Natural killer cell (primary cell): ENCODE measurements at regions of chr2 and their contacts with region 1.

Region 1: DNA sequence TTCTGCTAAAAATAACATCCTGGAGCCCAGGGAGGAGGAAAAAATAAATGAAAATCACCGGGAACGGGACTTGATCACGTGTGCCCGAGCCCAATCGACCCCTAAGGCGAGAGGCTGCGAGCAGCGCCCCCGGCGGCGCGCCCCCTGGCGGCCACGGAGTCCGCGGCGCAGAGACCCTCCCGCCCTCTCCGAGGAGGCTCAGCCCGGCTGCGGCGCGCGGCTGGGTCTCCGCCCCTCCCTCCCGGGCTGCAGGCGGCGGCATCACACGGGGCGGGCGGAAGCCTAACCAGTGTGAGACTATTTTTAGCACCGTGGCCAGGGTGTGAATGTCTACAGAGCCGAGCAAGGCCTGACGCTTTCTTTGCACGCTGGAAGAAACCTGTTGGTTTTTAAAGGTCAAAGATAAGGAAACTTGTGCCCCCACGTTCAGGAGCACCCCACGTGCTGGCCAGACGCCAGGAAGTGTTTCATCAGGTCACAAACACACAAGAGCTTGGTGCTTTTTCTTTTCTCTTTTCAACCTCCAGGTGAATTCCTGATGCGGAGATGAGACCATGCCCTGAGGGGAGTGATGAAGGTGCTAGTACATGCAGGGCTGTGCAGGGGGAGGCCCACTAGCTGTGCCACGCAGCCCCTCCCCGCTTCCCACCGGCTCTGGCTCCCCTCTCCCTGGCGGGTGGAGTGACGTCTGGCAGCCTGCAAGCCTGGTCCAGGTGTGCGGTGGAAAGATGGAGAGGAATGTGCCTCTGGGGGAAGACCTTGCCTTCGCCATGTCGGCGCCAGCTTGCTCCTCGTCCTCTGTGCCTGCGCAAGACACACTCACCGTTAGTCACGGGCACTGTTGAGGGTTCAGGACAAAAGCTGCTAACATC is 35.3 kb upstream of the DNMT3A start:
- DNase-seq: peak; percentile 94 to 97
- ATAC-seq: peak; percentile 94 to 98 (median 96)
- H3K4me3 ChIP-seq: peak overlapping the region; percentile 15
- H3K4me3 Mint-ChIP-seq: peak overlapping the region; percentile 87
- H3K27ac ChIP-seq: peak overlapping the region; percentile 83
- H3K27ac Mint-ChIP-seq: peak overlapping the region; percentile 93 to 94
- H3K4me1 ChIP-seq: peaks cover 37% of the 10 kb centered on the region
- H3K4me1 Mint-ChIP-seq: peaks cover 23 to 43% of the 10 kb centered on the region in 2 donors
- H3K27me3 ChIP-seq: no peaks in the 10 kb centered on the region
- H3K27me3 Mint-ChIP-seq: peaks cover 11 to 22% of the 10 kb centered on the region in 2 donors
- CTCF ChIP-seq: peak; percentile 98

Region 2: GRCh38 chr2:25056098-25056821 is 320.7 kb before region 1 on chr2:
- intact Hi-C with region 1: no loop called
- DNase-seq: no peak
- ATAC-seq: no peak
- H3K4me3 ChIP-seq: no peak overlapping the region
- H3K4me3 Mint-ChIP-seq: no peak overlapping the region
- H3K27ac ChIP-seq: no peak overlapping the region
- H3K27ac Mint-ChIP-seq: no peak overlapping the region
- H3K4me1 ChIP-seq: no peaks in the 10 kb centered on the region
- H3K4me1 Mint-ChIP-seq: no peaks in the 10 kb centered on the region
- H3K27me3 ChIP-seq: no peaks in the 10 kb centered on the region
- H3K27me3 Mint-ChIP-seq: peaks cover 0 to 1% of the 10 kb centered on the region in 2 donors
- CTCF ChIP-seq: no peak

Region 3: DNA sequence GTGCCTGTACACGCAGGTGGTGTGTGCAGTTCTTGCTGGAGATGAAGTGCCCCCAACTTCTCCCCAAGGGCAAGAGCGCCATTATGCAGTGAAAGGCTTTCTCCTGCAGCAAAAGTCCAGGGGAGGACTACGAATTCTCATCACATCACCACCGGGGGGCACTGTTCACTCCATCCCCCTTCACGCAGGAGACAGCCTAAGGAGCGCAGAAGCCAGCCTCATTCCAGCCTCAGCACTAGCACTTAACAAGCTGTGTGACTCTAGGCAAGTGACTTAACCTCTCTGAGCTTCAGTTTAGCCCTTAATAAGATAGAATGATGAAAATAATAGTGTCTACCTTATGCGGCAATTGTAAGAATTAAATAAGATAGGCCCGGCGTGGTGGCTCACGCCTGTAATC is 67.6 kb before region 1 on chr2:
- intact Hi-C with region 1: loop called (anchors 1 kb)
- DNase-seq: peak; percentile 59 to 82
- ATAC-seq: peak in 2 of 3 donors; percentile 20 to 27
- H3K4me3 ChIP-seq: no peak overlapping the region
- H3K4me3 Mint-ChIP-seq: no peak overlapping the region
- H3K27ac ChIP-seq: no peak overlapping the region
- H3K27ac Mint-ChIP-seq: no peak overlapping the region
- H3K4me1 ChIP-seq: peaks cover 64% of the 10 kb centered on the region
- H3K4me1 Mint-ChIP-seq: peaks cover 31 to 52% of the 10 kb centered on the region in 2 donors
- H3K27me3 ChIP-seq: no peaks in the 10 kb centered on the region
- H3K27me3 Mint-ChIP-seq: no peaks in the 10 kb centered on the region
- CTCF ChIP-seq: peak; percentile 47

Region 4: DNA sequence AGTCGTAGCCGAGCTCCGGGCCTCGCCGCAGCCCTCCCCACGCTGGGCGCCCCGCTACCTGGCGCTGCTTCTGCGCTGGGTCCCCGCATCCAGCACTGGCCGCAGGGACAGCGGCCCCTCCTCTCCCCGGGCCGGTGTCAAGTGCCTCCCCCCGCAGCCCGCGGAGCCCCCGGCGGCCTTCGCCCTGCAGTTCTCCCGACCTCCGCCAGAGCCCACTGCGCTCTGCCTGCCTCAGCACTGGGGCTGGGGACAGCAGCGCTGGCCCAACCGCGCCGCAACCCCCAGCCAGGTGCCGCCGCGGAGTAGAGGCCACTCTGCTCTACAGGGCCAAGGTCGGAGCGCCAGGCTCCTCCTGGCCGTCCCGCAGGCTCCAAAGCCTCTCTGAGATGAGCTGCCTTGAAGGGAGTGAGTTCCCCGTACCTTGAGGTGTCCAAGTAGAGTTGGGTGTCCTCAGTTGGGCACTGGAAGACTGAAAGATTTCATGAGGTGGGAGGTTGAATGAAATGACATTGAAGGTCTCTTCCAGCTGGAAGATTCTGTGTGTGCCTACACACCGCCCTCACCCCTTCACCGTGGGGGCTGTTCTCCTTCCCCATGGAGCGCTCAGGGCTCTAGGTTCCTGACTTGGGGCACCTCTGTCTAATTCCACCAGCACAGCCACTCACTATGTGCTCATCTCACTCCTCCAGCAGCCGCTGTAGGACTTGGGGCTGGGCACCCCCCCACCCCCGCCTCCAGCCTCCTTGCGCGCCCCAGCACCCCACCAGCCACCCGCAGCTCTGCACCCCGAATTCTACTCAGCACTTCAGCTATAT is 34.4 kb before region 1 on chr2:
- intact Hi-C with region 1: loop called (anchors 2 kb)
- DNase-seq: peak; percentile 82 to 90
- ATAC-seq: peak; percentile 93 to 98 (median 94)
- H3K4me3 ChIP-seq: peak overlapping the region; percentile 20
- H3K4me3 Mint-ChIP-seq: peak overlapping the region; percentile 91
- H3K27ac ChIP-seq: no peak overlapping the region
- H3K27ac Mint-ChIP-seq: peak overlapping the region in 1 of 2 donors; percentile 85
- H3K4me1 ChIP-seq: peaks cover 33% of the 10 kb centered on the region
- H3K4me1 Mint-ChIP-seq: peaks cover 8 to 19% of the 10 kb centered on the region in 2 donors
- H3K27me3 ChIP-seq: no peaks in the 10 kb centered on the region
- H3K27me3 Mint-ChIP-seq: no peaks in the 10 kb centered on the region
- CTCF ChIP-seq: peak; percentile 95

Region 5: DNA sequence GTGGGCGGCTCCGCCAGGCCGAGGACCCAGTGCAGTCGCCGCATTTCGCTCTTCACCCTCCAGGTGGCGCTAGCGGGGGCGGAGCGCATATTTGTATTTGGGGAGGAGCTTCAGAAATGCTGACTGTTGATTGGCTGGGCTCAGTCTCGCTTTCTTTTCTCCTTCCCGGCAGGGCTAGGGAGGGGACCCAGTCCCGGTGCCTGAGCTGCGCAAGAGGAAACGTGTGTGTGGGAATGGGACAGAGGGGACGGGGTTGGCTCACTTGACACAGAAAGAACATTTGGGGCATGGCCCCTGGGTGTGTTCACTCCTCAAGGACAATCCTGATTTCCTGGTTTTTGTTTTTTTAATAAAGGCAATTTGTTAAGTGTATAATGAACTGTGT is 14.9 kb before region 1 on chr2:
- intact Hi-C with region 1: loop called (anchors 1 kb)
- DNase-seq: peak; percentile 95 to 96
- ATAC-seq: peak; percentile 88 to 95 (median 88)
- H3K4me3 ChIP-seq: peak overlapping the region; percentile 74
- H3K4me3 Mint-ChIP-seq: peak overlapping the region; percentile 94
- H3K27ac ChIP-seq: peak overlapping the region; percentile 93
- H3K27ac Mint-ChIP-seq: peak overlapping the region; percentile 94 to 96
- H3K4me1 ChIP-seq: peaks cover 21% of the 10 kb centered on the region
- H3K4me1 Mint-ChIP-seq: peaks cover 26 to 33% of the 10 kb centered on the region in 2 donors
- H3K27me3 ChIP-seq: no peaks in the 10 kb centered on the region
- H3K27me3 Mint-ChIP-seq: no peaks in the 10 kb centered on the region
- CTCF ChIP-seq: peak; percentile 90

Region 6: DNA sequence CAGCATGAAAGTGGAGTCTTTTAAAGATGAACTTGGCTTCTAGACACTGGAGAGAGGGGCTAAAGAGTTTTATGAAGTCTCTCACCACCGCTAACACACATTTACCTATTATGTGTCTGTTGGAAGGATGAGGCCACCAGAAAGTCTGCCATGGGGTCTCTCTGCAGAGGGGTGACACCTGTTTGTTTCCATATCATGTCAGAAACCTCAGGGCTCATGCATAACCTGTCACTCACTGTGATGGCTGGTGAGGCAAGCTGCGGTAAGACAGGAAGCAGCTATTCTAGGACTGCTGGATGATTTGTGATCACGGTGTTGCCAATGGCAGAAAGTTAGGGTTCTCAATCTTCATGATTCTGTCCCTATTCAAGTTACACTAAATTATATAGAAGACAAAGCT is 25.5 kb after region 1 on chr2:
- intact Hi-C with region 1: loop called (anchors 2 kb)
- DNase-seq: no peak
- ATAC-seq: peak in 1 of 3 donors; percentile 25
- H3K4me3 ChIP-seq: no peak overlapping the region
- H3K4me3 Mint-ChIP-seq: peak overlapping the region; percentile 68
- H3K27ac ChIP-seq: peak overlapping the region; percentile 22
- H3K27ac Mint-ChIP-seq: peak overlapping the region; percentile 82 to 87
- H3K4me1 ChIP-seq: peaks cover 20% of the 10 kb centered on the region
- H3K4me1 Mint-ChIP-seq: peaks cover 25 to 33% of the 10 kb centered on the region in 2 donors
- H3K27me3 ChIP-seq: no peaks in the 10 kb centered on the region
- H3K27me3 Mint-ChIP-seq: no peaks in the 10 kb centered on the region
- CTCF ChIP-seq: no peak

Region 7: GRCh38 chr2:25521665-25522387 is 144.8 kb after region 1 on chr2:
- intact Hi-C with region 1: loop called (anchors 1 kb)
- DNase-seq: peak in 1 of 2 donors; percentile 86
- ATAC-seq: peak; percentile 96 to 100 (median 100)
- H3K4me3 ChIP-seq: no peak overlapping the region
- H3K4me3 Mint-ChIP-seq: peak overlapping the region; percentile 25
- H3K27ac ChIP-seq: peak overlapping the region; percentile 53
- H3K27ac Mint-ChIP-seq: peak overlapping the region; percentile 62 to 71
- H3K4me1 ChIP-seq: peaks cover 5% of the 10 kb centered on the region
- H3K4me1 Mint-ChIP-seq: peaks cover 8 to 9% of the 10 kb centered on the region in 2 donors
- H3K27me3 ChIP-seq: no peaks in the 10 kb centered on the region
- H3K27me3 Mint-ChIP-seq: no peaks in the 10 kb centered on the region
- CTCF ChIP-seq: peak; percentile 77

Region 8: GRCh38 chr2:25558262-25558661 is 181.3 kb after region 1 on chr2:
- intact Hi-C with region 1: loop called (anchors 2 kb)
- DNase-seq: peak in 1 of 2 donors; percentile 46
- ATAC-seq: peak; percentile 84 to 93 (median 87)
- H3K4me3 ChIP-seq: no peak overlapping the region
- H3K4me3 Mint-ChIP-seq: peak overlapping the region; percentile 57
- H3K27ac ChIP-seq: peak overlapping the region; percentile 65
- H3K27ac Mint-ChIP-seq: peak overlapping the region; percentile 90 to 93
- H3K4me1 ChIP-seq: peaks cover 18% of the 10 kb centered on the region
- H3K4me1 Mint-ChIP-seq: peaks cover 52 to 53% of the 10 kb centered on the region in 2 donors
- H3K27me3 ChIP-seq: no peaks in the 10 kb centered on the region
- H3K27me3 Mint-ChIP-seq: no peaks in the 10 kb centered on the region
- CTCF ChIP-seq: no peak